HEK293 (cell line): ENCODE measurements at regions of chr9 and their contacts with region 1.

Region 1: DNA sequence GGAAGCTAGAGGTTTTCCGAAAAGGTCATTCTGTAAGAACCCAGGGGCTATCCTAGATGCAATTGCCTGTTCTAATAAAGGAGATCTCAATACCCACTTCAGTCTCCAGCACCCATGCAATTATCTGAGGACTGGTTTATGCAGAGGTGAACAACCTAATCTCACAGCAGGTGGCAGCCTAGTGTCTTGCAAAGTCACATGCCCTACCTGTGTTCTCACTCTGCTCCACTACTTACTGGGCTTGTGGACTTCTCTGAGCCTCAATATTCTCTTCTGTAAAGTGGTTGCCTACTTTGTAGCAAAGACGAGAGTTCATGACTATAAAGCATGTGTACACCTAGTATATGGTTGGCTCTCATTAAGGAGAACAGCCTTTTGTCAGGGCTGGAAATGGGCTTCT is 21.0 kb upstream of the ALDH1B1 start:
- H3K4me3 ChIP-seq: no peak overlapping the region
- H3K27ac ChIP-seq: no peak overlapping the region
- H3K4me1 ChIP-seq: no peaks in the 10 kb centered on the region
- CTCF ChIP-seq: no peak

Region 2: GRCh38 chr9:38352530-38353328 is 18.8 kb before region 1 on chr9:
- CTCF ChIA-PET with region 1: no interaction called
- POLR2A ChIA-PET with region 1: no interaction called
- H3K4me3 ChIP-seq: no peak overlapping the region
- H3K27ac ChIP-seq: no peak overlapping the region
- H3K4me1 ChIP-seq: no peaks in the 10 kb centered on the region
- CTCF ChIP-seq: no peak

Region 3: GRCh38 chr9:38405785-38406184 is 34.3 kb after region 1 on chr9:
- CTCF ChIA-PET with region 1: interaction called, 13 read pairs
- POLR2A ChIA-PET with region 1: no interaction called
- H3K4me3 ChIP-seq: no peak overlapping the region
- H3K27ac ChIP-seq: no peak overlapping the region
- H3K4me1 ChIP-seq: no peaks in the 10 kb centered on the region
- CTCF ChIP-seq: no peak